Cardiac septum (tissue), 1 donor: ENCODE measurements at regions of chr20 and their contacts with region 1.

Region 1: DNA sequence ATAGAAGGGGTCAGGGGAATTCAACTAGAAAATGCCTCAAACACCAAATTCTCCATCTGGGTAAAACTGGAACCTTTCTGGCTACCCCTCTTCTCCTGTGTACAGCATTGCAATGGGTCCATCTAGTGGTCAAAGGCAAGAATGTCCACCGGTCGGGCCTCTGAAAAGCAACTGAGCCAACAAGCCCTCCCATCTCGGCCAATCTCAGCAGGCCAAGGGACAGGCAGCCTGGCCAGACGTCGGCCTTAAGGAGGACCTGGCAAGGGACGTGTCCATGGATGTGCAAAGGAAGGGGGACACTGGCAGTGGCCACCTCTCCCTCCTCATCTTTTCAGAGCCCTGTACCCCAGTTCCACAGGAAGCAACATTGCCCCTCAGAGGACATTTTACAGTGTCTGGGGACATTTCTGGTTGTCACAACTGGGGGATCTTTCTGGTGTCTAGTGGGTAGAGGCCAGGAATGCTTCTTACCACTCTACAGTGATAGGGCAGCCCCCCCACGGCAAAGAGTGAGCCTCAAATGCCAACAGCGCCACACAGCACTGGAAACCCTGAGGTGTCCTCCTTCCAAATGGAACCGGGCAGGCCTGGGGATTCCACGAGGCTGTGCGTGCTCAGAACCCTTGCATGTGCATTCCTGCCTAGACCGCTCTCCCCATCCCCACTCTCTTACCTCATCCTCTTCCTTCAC is 99.8 kb upstream of the FOXA2 start:
- DNase-seq: peak; percentile 79

Region 2: DNA sequence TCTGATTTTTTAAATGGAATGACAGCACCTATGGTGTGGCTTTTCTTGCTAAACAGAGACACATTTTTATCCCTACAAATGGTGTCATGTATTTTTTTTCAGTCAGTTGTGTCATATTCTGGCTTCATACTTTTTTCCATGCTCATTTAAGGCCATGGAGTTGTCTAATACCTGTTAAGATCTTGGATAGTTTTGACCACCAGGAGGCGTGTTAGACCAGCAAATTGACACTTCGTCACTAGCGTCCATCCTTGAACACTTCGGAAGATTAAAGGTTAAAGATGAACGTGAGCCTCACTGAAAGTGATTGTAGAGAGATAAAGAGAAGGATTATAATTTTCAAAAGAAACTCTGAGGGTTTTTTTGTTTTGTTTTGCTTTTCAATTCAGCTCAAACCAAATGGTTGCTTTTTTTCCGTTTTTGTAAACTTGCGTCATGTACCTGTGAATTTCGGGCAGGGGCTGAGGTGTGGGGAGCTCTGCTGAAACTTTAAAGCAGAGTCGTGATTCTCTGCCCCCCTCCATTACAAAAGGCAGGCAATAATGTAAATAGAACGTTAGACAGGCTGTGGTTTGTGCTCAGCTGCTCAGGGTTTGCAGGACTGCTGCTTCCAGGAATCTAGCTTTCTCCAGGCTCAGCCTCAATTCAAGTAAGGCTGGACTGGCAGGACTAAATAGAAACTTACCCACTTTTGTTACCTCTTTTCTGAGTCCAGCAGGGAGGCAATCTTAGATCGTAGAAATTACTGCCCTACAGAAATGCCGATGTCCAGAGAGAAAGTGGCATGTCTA is 344.9 kb before region 1 on chr20:
- intact Hi-C with region 1: loop called (anchors 1 kb)
- DNase-seq: no peak

Region 3: DNA sequence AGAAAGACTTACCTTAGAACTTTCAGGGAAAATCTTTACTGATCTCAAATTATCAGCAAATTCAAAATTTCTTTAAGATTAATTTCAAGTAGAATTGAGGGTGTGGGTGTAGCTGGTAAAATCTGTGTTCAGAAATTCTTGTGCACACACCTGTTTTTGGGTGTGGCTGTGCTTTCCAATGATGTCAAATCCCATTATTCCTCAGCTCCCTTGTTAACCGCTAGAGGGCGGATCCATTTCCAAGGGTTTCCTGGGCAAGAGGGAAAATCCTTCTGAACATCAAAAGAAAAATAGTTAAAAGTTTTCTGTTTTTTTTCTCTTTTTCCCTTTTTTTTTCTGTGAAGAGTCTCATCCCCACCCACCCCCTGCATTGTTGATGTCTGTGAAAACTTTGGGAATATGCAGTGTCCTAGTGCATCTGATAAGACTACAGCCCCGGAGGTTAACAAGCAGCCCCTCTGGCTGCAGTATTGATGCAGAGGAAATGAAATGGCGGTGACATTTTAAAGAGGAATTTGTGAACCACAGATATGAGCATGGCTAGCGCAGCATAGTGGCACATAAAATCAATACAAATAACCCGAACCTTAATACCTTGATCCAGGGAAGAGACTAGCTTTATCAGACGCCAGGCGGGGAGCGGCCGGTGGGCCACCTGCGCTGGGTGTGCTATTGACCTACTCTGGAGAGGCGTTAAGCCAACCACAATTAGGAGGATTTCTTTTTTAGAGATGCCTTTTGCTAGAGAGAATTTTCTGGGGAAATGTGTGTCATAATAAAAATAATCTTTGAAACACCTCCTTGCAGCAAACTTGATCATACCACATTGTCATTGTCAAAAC is 230.8 kb before region 1 on chr20:
- intact Hi-C with region 1: loop called (anchors 5 kb)
- DNase-seq: no peak

Region 4: DNA sequence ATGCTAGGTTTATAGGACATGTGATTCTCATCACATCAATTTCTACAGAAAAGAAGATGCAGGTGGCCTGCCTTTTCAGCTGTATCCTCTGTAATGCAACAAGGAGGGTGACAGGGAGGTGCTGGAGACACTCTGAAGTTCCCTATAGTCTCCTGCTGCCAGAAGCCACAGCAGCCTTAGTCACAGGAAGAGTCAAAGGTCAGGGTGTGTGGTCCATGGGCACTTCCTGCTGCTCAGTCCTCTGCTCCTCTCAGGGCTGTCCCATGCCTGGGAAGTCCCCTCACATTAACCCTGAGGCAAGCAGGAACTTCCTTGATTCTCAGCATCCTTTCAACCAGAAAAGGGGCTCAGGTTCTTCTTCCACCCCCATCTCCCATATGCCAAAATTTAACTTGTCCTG is 45.0 kb after region 1 on chr20:
- intact Hi-C with region 1: no loop called
- DNase-seq: no peak

Region 5: GRCh38 chr20:22775671-22776139 is 91.5 kb after region 1 on chr20:
- intact Hi-C with region 1: no loop called
- DNase-seq: no peak

Region 6: GRCh38 chr20:22825076-22825475 is 140.9 kb after region 1 on chr20:
- intact Hi-C with region 1: no loop called
- DNase-seq: no peak